ENCODE measurements at regions of chr1 and their contacts with region 1.

Region 1: DNA sequence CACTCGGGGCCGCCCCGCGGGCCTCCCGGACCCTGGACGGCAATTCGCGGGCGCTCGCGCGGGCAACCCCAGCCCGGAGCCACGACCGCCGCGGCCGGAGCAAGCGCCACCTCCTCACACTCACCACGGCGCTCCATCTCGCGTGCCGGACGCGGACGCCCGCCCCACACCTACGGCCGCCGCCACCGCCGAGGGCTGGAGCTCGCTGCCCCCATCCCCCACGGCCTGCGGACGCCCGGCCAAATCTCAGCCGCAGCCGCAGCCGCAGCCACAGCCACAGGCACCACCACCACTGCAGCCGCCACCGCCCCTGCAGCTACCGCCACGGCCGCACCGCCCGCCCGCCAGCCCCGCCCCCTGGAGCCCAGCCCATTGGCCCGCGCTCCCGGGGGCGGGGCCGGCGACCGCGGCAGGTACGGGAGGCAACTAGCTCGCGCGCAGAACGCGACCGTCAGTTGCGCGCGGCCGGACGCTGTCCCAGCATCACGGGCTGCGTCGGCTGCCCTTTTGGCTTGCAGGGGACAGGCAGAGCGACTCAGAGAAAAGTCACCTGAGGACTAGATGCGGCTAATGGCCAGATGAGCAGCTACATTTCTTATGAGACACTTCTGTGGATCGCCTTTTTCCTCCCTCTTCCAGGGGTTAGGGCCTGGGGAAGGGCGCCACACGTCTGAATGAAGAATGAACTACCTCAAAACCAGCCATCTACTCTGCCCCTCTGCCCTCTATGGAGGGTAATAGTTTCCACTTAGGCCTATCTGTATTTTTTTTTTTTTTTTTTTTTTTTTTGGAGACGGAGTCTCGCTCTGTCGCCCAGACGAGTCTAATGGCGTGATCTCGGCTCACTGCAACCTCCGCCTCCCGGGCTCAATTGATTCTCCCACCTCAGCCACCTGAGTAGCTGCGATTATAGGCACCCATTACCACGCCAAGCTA is at the start of gene ARHGAP29:
- DNase-seq: peak; percentile 74
- ATAC-seq: peak; percentile 95
- H3K4me3 ChIP-seq: peak within 1 kb of the TSS; percentile 73 to 97 (median 93)
- H3K27ac ChIP-seq: peak within 1 kb of the TSS; percentile 66
- H3K4me1 ChIP-seq: peaks cover 45% of the 10 kb centered on the region
- H3K27me3 ChIP-seq: no peaks in the 10 kb centered on the region; a peak in 1 of 5 replicates
- CTCF ChIP-seq: peak; percentile 32; the same call in 1 of the 2 replicates
- EP300 ChIP-seq: no peak
- POLR2A ChIP-seq: peak; percentile 85 to 99
- RAD21 ChIP-seq: no peak
- total RNA-seq, gene ARHGAP29: 12.8 and 18.8 TPM in 2 replicates

Region 2: GRCh38 chr1:94025383-94026340 is 211.9 kb before region 1 on chr1:
- CTCF ChIA-PET with region 1: interaction called, 8 read pairs
- POLR2A ChIA-PET with region 1: interaction called, 6 read pairs
- in situ Hi-C with region 1: no loop called
- intact Hi-C with region 1: loop called (anchors 5 kb)
- DNase-seq: peak; percentile 69
- ATAC-seq: peak; percentile 36
- H3K4me3 ChIP-seq: peak overlapping the region in 1 of 3 experiments; percentile 45; a peak in 1 of 6 replicates
- H3K27ac ChIP-seq: no peak overlapping the region
- H3K4me1 ChIP-seq: peaks cover 82% of the 10 kb centered on the region
- H3K27me3 ChIP-seq: peaks cover 0 to 6% of the 10 kb centered on the region in 2 experiments; a peak in 3 of 5 replicates
- CTCF ChIP-seq: peak; percentile 79
- EP300 ChIP-seq: no peak
- POLR2A ChIP-seq: no peak
- RAD21 ChIP-seq: peak; percentile 80

Region 3: GRCh38 chr1:94061513-94062443 is 175.8 kb before region 1 on chr1:
- CTCF ChIA-PET with region 1: interaction called, 27 read pairs
- POLR2A ChIA-PET with region 1: interaction called, 43 read pairs
- in situ Hi-C with region 1: loop called (anchors 5 kb)
- intact Hi-C with region 1: loop called (anchors 1 kb)
- DNase-seq: peak; percentile 97
- ATAC-seq: peak; percentile 91
- H3K4me3 ChIP-seq: peak overlapping the region; percentile 14 to 58 (median 52); a peak in 5 of 6 replicates
- H3K27ac ChIP-seq: peak overlapping the region; percentile 63
- H3K4me1 ChIP-seq: peaks cover 57% of the 10 kb centered on the region
- H3K27me3 ChIP-seq: no peaks in the 10 kb centered on the region
- CTCF ChIP-seq: peak; percentile 95
- EP300 ChIP-seq: peak in 1 of 2 experiments; percentile 56; a peak in 1 of 4 replicates
- POLR2A ChIP-seq: no peak
- RAD21 ChIP-seq: peak; percentile 96

Region 4: DNA sequence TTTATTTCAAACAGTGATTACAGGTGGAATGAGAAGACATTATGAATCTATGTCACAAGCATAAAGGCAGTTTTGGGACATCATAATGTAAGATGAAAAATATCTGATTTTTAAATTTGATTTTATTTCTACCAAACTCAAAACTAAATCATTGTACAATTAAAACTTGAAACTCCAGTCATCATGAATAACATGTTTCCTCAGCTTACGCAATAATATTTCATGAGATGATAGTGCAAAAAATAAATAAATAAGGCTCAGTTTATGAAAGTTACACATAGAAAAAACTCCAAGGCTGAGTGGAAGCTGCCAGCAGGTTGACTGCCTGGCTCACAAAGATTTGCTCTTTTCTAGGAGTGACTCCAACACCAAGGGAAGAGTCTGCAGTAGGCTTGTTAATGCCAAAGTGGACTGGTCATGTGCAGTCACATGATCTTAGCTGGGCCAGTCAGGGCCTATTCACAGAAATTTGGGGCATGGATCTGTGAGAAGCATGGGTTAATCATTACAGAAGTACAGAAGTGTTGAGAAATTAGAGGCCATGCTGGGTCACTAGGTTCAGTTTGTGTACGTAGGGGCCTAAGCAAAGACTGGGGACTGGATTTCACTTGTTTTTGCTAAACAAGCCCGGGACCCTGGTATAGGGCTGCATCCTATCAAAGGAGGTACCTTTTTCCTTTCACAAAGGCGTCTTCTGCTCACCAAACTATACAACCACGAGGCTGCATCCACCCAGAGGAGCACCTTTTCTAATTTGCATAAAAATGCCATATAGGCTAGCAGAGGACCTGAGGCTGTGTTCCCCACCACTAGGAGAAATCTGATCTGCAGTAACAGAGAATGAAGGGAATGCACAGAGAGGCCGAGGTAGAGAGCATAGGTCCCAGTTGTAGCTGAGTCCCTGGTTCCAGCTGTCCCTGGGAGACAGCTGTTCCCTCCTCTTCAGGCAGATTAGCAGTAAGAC is 111.7 kb before region 1 on chr1:
- CTCF ChIA-PET with region 1: no interaction called
- POLR2A ChIA-PET with region 1: interaction called, 3 read pairs
- in situ Hi-C with region 1: no loop called
- intact Hi-C with region 1: loop called (anchors 5 kb)
- DNase-seq: peak; percentile 96
- ATAC-seq: peak; percentile 97
- H3K4me3 ChIP-seq: peak overlapping the region; percentile 23 to 40 (median 25); a peak in 5 of 6 replicates
- H3K27ac ChIP-seq: peak overlapping the region; percentile 78
- H3K4me1 ChIP-seq: peaks cover 54% of the 10 kb centered on the region
- H3K27me3 ChIP-seq: no peaks in the 10 kb centered on the region
- CTCF ChIP-seq: peak; percentile 31; the same call in 1 of the 2 replicates
- EP300 ChIP-seq: peak in 1 of 2 experiments; percentile 90; a peak in 3 of 4 replicates
- POLR2A ChIP-seq: peak; percentile 30 to 48; a peak in 2 of 4 replicates
- RAD21 ChIP-seq: no peak

Region 5: GRCh38 chr1:94335950-94336349 is 98.4 kb after region 1 on chr1:
- CTCF ChIA-PET with region 1: interaction called, 12 read pairs
- POLR2A ChIA-PET with region 1: interaction called, 12 read pairs
- in situ Hi-C with region 1: no loop called
- intact Hi-C with region 1: loop called (anchors 2 kb)
- DNase-seq: peak; percentile 90
- ATAC-seq: peak; percentile 86
- H3K4me3 ChIP-seq: no peak overlapping the region
- H3K27ac ChIP-seq: no peak overlapping the region
- H3K4me1 ChIP-seq: peaks cover 38% of the 10 kb centered on the region
- H3K27me3 ChIP-seq: no peaks in the 10 kb centered on the region; a peak in 1 of 5 replicates
- CTCF ChIP-seq: peak; percentile 93
- EP300 ChIP-seq: 0 out of 4 replicates have a peak, but pooled peaks of 1 of the 2 experiments have one; percentile 26
- POLR2A ChIP-seq: no peak
- RAD21 ChIP-seq: peak; percentile 95

Measured in HepG2 (cell line).